ENCODE measurements at regions of chr17 and their contacts with region 1.

Region 1: GRCh38 chr17:82320956-82321927 is 3.8 kb upstream of the CD7 start:
- DNase-seq: peak in 1 of 7 donors; percentile 37
- H3K4me3 ChIP-seq: no peak overlapping the region
- H3K27ac ChIP-seq: no peak overlapping the region
- H3K4me1 ChIP-seq: no peaks in the 10 kb centered on the region
- H3K27me3 ChIP-seq: no peaks in the 10 kb centered on the region
- CTCF ChIP-seq: peak; percentile 60 to 91 (median 84)
- POLR2A ChIP-seq: no peak

Region 2: DNA sequence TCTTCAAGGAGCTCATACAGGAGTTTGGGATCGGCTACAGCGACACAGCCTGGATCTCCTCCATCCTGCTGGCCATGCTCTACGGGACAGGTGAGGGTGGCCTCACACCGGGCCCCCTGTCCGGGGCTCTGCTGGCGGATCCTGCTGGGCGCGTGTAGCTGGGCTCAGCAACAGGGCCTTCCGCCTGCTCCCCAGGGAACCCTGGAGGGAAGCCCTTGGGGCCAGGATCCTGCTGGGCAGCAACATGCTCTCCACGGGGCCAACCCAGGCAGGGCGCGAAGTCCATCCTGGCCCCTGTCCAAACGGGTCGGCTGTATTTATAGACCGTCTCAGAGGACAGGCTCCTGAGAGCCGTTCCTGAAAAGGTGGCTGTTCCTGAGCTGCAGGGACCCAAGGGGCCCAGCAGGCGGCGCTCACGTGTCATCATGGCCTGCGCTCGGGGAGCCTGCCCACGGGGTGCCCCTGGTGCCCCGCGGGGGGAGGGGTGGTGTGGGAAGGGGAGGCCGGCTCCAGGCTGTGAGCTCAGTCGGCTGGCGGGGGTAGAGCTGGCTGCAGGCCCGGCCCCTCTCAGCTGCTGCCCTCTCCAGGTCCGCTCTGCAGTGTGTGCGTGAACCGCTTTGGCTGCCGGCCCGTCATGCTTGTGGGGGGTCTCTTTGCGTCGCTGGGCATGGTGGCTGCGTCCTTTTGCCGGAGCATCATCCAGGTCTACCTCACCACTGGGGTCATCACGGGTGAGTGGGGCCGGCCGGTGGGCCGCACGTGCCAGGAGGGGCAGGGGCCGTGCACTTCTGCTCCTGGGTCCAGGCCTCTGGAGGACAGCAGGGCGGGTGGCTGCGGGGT is 84.9 kb before region 1 on chr17:
- intact Hi-C with region 1: loop called (anchors 2 to 5 kb)
- DNase-seq: peak; percentile 67 to 92 (median 81)
- H3K4me3 ChIP-seq: no peak overlapping the region
- H3K27ac ChIP-seq: peak overlapping the region in 2 of 5 donors; percentile 29 to 60
- H3K4me1 ChIP-seq: peaks cover 33 to 60% of the 10 kb centered on the region in 2 donors
- H3K27me3 ChIP-seq: no peaks in the 10 kb centered on the region
- CTCF ChIP-seq: peak; percentile 92 to 95 (median 92)
- POLR2A ChIP-seq: no peak

Region 3: DNA sequence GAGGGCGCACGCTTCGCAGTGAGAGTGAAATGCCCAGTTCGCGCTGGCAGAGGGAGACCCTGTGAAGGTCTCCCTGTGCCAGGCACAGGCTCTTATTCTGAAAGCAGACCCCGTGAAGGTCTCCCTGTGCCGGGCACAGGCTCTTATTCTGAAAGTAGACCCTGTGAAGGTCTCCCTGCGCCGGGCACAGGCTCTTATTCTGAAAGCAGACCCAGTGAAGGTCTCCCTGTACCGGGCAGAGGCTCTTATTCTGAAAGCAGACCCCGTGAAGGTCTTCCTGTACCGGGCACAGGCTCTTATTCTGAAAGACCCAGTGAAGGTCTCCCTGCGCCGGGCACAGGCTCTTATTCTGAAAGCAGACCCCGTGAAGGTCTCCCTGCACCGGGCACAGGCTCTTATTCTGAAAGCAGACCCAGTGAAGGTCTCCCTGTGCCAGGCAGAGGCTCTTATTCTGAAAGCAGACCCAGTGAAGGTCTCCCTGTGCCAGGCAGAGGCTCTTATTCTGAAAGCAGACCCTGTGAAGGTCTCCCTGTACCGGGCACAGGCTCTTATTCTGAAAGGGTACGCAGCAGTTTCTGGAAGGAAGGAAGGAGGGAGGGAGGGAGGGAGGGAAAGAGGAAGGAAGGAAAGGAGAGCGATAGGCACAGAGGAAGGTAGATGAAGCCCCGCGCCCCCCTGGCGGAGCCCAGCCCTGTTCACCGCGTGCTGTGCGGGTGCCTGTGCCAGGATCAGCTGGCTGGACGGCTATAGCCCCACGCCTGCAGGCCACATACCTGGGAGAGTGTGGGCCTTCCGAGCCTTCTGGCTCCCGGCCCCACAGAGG is 271.7 kb after region 1 on chr17:
- intact Hi-C with region 1: no loop called
- DNase-seq: peak; percentile 83 to 93 (median 87)
- H3K4me3 ChIP-seq: peak overlapping the region; percentile 25 to 69 (median 48)
- H3K27ac ChIP-seq: peak overlapping the region; percentile 89 to 98 (median 92)
- H3K4me1 ChIP-seq: peaks cover 13 to 31% of the 10 kb centered on the region in 2 donors
- H3K27me3 ChIP-seq: no peaks in the 10 kb centered on the region
- CTCF ChIP-seq: no peak
- POLR2A ChIP-seq: peak in 1 of 2 donors; percentile 23

Measured in adrenal gland (tissue), 19 donors.